GM13977 (cell line): ENCODE measurements at regions of chr16 and their contacts with region 1.

Region 1: GRCh38 chr16:20849587-20850390 is 43.5 kb downstream of the REXO5 start:
- DNase-seq: no peak
- CTCF ChIP-seq: peak; percentile 97

Region 2: DNA sequence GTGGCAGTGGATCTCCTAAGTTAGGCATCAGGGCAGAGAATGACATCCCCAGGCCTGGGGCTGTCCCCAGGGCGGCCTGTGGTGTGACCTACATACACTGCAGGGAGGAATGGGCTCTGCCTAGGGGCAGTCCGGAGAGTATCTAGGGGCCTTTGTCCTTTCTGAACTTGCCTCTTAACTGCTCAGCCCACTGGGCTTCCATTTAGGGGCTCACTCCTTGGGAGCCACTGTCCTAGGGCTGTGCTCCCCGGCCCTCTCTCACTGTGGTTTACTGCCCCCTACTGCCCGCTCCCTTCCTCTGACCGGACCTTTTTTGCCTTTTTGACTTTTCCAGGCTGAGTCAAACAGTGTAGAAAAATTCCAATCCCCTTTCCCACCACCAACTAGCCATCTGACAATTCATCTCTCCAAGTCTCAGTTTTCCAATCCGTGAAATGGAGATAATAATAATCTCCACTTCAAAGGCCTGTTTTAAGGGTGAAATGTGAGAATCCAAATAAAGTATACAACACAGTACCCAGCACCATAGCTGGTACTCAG is 234.0 kb after region 1 on chr16:
- in situ Hi-C with region 1: loop called (anchors 5 kb)
- DNase-seq: peak; percentile 45
- CTCF ChIP-seq: peak; percentile 86